Activated CD4-positive, alpha-beta memory T cell treated with anti-CD3 and anti-CD28 coated beads, Interleukin-2, amount 10 ng/mL, durations not matched to agents 7 days and 5 days (primary cell): ENCODE measurements at regions of chr17 and their contacts with region 1.

Region 1: GRCh38 chr17:80254396-80255251 is 6.0 kb upstream of the RNF213 start:
- DNase-seq: peak; percentile 84
- H3K4me3 Mint-ChIP-seq: peak overlapping the region; percentile 54
- H3K27ac Mint-ChIP-seq: peak overlapping the region; percentile 96
- H3K4me1 Mint-ChIP-seq: peaks cover 80% of the 10 kb centered on the region
- H3K27me3 Mint-ChIP-seq: no peaks in the 10 kb centered on the region

Region 2: GRCh38 chr17:80195731-80196529 is 58.7 kb before region 1 on chr17:
- CTCF ChIA-PET with region 1: interaction called, 28 read pairs
- POLR2A ChIA-PET with region 1: interaction called, 7 read pairs
- DNase-seq: peak; percentile 60
- H3K4me3 Mint-ChIP-seq: no peak overlapping the region
- H3K27ac Mint-ChIP-seq: no peak overlapping the region
- H3K4me1 Mint-ChIP-seq: no peaks in the 10 kb centered on the region
- H3K27me3 Mint-ChIP-seq: peaks cover 11% of the 10 kb centered on the region

Region 3: DNA sequence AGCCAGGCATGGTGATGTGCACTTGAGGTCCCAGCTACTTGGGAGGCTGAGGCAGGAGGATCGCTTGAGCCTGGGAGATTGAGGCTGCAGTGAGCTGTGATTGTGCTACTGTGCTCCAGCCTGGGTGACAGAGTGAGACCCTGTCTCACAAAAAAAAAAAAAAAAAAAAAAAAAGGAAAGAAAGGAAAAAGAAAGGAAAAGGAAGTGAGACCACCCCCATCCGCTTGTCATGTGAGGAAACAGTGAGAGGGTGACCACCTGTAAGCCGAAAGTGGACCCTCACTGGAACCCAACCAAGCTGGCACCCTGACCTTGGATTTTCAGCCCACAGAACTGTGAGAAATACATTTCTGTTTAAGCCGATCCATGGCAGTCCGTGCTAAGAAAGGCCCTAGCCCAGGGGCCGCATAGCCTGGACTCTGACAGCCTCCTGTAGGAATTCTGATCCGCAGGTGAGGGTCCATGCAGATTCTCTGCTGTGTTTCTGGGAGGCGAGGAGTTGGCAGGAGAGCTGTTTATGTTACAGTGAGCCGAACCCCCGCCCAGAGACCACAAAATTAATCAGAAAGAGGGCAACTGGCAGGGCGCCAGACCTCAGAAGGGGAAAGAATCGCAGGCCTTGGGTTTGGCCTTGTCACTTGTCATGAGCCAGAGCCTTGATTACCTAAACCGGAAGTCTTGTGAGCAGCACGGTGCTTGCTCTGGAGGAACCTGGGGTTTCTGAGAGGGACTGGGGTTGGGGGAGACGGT is 35.4 kb before region 1 on chr17:
- CTCF ChIA-PET with region 1: interaction called, 12 read pairs
- POLR2A ChIA-PET with region 1: interaction called, 31 read pairs
- DNase-seq: peak; percentile 95
- H3K4me3 Mint-ChIP-seq: peak overlapping the region; percentile 89
- H3K27ac Mint-ChIP-seq: peak overlapping the region; percentile 89
- H3K4me1 Mint-ChIP-seq: peaks cover 32% of the 10 kb centered on the region
- H3K27me3 Mint-ChIP-seq: peaks cover 1% of the 10 kb centered on the region